CD8-positive, alpha-beta T cell (primary cell): ENCODE measurements at regions of chr9 and their contacts with region 1.

Region 1: GRCh38 chr9:69861005-69861404 is 40.4 kb downstream of the CFAP95 start:
- DNase-seq: no peak
- ATAC-seq: no peak
- H3K4me3 ChIP-seq: no peak overlapping the region
- H3K4me3 Mint-ChIP-seq: no peak overlapping the region
- H3K27ac ChIP-seq: no peak overlapping the region
- H3K27ac Mint-ChIP-seq: no peak overlapping the region
- H3K4me1 ChIP-seq: no peaks in the 10 kb centered on the region
- H3K4me1 Mint-ChIP-seq: peaks cover 5% of the 10 kb centered on the region
- H3K27me3 ChIP-seq: no peaks in the 10 kb centered on the region
- H3K27me3 Mint-ChIP-seq: no peaks in the 10 kb centered on the region
- CTCF ChIP-seq: no peak

Region 2: DNA sequence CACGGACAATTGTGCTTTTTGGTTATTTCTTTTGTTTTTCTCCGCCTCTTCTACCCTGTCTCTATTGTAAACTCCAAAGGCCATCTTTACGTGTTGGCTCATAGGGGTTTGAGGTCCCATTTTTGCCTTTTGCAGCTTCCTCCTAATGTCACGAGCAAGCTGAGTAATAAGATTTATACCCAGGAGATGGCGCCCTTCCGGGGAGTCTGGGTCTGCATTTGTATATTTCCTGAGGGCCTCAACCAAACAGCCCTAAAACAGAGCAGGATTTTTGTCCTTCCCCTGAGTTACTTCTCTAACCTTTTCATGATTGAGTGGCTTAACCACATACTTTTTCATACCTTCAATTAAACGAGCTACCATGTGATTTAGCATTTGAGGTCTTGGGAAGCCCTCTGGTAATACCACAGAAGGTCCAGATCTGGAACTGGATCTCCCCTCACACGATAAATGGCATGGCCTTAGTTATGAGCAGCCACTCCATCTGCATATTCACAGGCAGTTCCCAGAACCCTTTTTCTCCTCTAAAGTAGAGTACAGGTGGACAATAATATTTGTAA is 51.6 kb before region 1 on chr9:
- CTCF ChIA-PET with region 1: interaction called, 5 read pairs
- POLR2A ChIA-PET with region 1: no interaction called
- intact Hi-C with region 1: loop called in 1 of 2 experiments (anchors 5 kb)
- DNase-seq: peak in 7 of 9 experiments; percentile 16 to 59 (median 25)
- ATAC-seq: peak; percentile 52
- H3K4me3 ChIP-seq: no peak overlapping the region
- H3K4me3 Mint-ChIP-seq: no peak overlapping the region
- H3K27ac ChIP-seq: no peak overlapping the region
- H3K27ac Mint-ChIP-seq: no peak overlapping the region
- H3K4me1 ChIP-seq: no peaks in the 10 kb centered on the region
- H3K4me1 Mint-ChIP-seq: no peaks in the 10 kb centered on the region
- H3K27me3 ChIP-seq: no peaks in the 10 kb centered on the region
- H3K27me3 Mint-ChIP-seq: peaks cover 3% of the 10 kb centered on the region
- CTCF ChIP-seq: peak; percentile 34

Region 3: GRCh38 chr9:70073193-70073592 is 212.2 kb after region 1 on chr9:
- CTCF ChIA-PET with region 1: no interaction called
- POLR2A ChIA-PET with region 1: no interaction called
- intact Hi-C with region 1: no loop called
- DNase-seq: no peak
- ATAC-seq: no peak
- H3K4me3 ChIP-seq: no peak overlapping the region
- H3K4me3 Mint-ChIP-seq: no peak overlapping the region
- H3K27ac ChIP-seq: no peak overlapping the region
- H3K27ac Mint-ChIP-seq: no peak overlapping the region
- H3K4me1 ChIP-seq: no peaks in the 10 kb centered on the region
- H3K4me1 Mint-ChIP-seq: no peaks in the 10 kb centered on the region
- H3K27me3 ChIP-seq: peaks cover 0 to 3% of the 10 kb centered on the region in 2 experiments
- H3K27me3 Mint-ChIP-seq: peaks cover 10% of the 10 kb centered on the region
- CTCF ChIP-seq: no peak